Activated CD4-positive, alpha-beta T cell treated with anti-CD3 and anti-CD28 coated beads for 36 hours (primary cell): ENCODE measurements at regions of chr18 and their contacts with region 1.

Region 1: GRCh38 chr18:23231340-23232021 is 96.2 kb downstream of the CABLES1 start:
- DNase-seq: peak; percentile 87
- ATAC-seq: peak; percentile 90
- H3K4me3 Mint-ChIP-seq: peak overlapping the region; percentile 16
- H3K27ac Mint-ChIP-seq: peak overlapping the region; percentile 97
- H3K4me1 Mint-ChIP-seq: peaks cover 54% of the 10 kb centered on the region
- H3K27me3 Mint-ChIP-seq: no peaks in the 10 kb centered on the region

Region 2: GRCh38 chr18:23071285-23071684 is 160.2 kb before region 1 on chr18:
- CTCF ChIA-PET with region 1: no interaction called
- POLR2A ChIA-PET with region 1: no interaction called
- intact Hi-C with region 1: loop called in 1 of 2 experiments (anchors 1 kb)
- DNase-seq: peak; percentile 84
- ATAC-seq: peak; percentile 96
- H3K4me3 Mint-ChIP-seq: peak overlapping the region; percentile 34
- H3K27ac Mint-ChIP-seq: peak overlapping the region; percentile 86
- H3K4me1 Mint-ChIP-seq: peaks cover 55% of the 10 kb centered on the region
- H3K27me3 Mint-ChIP-seq: no peaks in the 10 kb centered on the region

Region 3: DNA sequence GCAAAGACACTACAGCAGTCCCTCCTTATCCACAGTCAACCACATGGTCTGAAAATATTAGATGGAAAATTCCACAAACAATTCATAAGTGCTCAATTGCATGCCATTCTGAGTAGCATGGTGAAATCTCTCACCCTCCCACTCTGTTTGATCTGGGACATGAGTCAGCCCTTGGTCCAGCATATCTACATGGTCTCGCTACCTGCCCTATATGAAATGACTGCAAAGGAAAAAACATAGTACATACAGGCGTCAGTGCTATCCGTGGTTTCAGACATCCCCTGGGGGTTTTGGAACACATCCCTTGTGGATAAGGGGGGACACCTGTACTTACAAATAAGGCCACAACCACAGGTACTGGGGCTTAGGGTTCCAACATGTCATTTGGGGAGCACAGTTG is 22.4 kb before region 1 on chr18:
- CTCF ChIA-PET with region 1: interaction called, 3 read pairs
- POLR2A ChIA-PET with region 1: no interaction called
- intact Hi-C with region 1: loop called (anchors 1 kb)
- DNase-seq: peak; percentile 55
- ATAC-seq: peak; percentile 91
- H3K4me3 Mint-ChIP-seq: no peak overlapping the region
- H3K27ac Mint-ChIP-seq: peak overlapping the region; percentile 78
- H3K4me1 Mint-ChIP-seq: peaks cover 33% of the 10 kb centered on the region
- H3K27me3 Mint-ChIP-seq: no peaks in the 10 kb centered on the region

Region 4: DNA sequence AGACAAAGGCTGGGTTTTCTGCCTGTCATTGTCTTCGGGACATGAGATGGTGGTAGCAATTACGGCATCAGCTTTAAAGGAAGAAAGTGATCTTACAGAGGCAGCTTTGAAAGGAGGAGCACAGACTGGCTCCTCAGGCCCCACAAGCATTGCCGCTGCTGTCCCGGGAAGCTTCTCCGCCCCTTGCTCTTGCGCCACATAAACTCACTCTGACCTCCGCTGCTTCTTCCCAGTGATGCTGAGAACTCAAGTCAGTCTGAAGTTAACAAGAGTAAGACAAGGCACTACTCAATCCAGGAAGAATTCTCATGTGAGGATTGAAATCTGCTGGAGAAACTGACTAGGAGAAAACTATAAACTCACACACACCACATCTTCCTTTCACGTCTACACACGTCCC is 109.2 kb after region 1 on chr18:
- CTCF ChIA-PET with region 1: no interaction called
- POLR2A ChIA-PET with region 1: no interaction called
- intact Hi-C with region 1: loop called in 1 of 2 experiments (anchors 1 kb)
- DNase-seq: no peak
- ATAC-seq: no peak
- H3K4me3 Mint-ChIP-seq: no peak overlapping the region
- H3K27ac Mint-ChIP-seq: peak overlapping the region; percentile 84
- H3K4me1 Mint-ChIP-seq: peaks cover 37% of the 10 kb centered on the region
- H3K27me3 Mint-ChIP-seq: no peaks in the 10 kb centered on the region

Region 5: GRCh38 chr18:23437357-23438045 is 206.0 kb after region 1 on chr18:
- CTCF ChIA-PET with region 1: no interaction called
- POLR2A ChIA-PET with region 1: no interaction called
- intact Hi-C with region 1: loop called in 1 of 2 experiments (anchors 5 kb)
- DNase-seq: peak; percentile 91
- ATAC-seq: peak; percentile 100
- H3K4me3 Mint-ChIP-seq: peak overlapping the region; percentile 93
- H3K27ac Mint-ChIP-seq: peak overlapping the region; percentile 89
- H3K4me1 Mint-ChIP-seq: peaks cover 17% of the 10 kb centered on the region
- H3K27me3 Mint-ChIP-seq: no peaks in the 10 kb centered on the region

Region 6: GRCh38 chr18:23503038-23503962 is 271.8 kb after region 1 on chr18 and contains the start of gene RMC1:
- CTCF ChIA-PET with region 1: interaction called, 4 read pairs
- POLR2A ChIA-PET with region 1: no interaction called
- intact Hi-C with region 1: loop called (anchors 1 to 2 kb)
- DNase-seq: peak; percentile 99
- ATAC-seq: peak; percentile 91
- H3K4me3 Mint-ChIP-seq: peak within 1 kb of the TSS; percentile 94
- H3K27ac Mint-ChIP-seq: peak within 1 kb of the TSS; percentile 94
- H3K4me1 Mint-ChIP-seq: peaks cover 38% of the 10 kb centered on the region
- H3K27me3 Mint-ChIP-seq: no peaks in the 10 kb centered on the region
- total RNA-seq, gene RMC1: 28.7 to 29.8 TPM

Region 7: DNA sequence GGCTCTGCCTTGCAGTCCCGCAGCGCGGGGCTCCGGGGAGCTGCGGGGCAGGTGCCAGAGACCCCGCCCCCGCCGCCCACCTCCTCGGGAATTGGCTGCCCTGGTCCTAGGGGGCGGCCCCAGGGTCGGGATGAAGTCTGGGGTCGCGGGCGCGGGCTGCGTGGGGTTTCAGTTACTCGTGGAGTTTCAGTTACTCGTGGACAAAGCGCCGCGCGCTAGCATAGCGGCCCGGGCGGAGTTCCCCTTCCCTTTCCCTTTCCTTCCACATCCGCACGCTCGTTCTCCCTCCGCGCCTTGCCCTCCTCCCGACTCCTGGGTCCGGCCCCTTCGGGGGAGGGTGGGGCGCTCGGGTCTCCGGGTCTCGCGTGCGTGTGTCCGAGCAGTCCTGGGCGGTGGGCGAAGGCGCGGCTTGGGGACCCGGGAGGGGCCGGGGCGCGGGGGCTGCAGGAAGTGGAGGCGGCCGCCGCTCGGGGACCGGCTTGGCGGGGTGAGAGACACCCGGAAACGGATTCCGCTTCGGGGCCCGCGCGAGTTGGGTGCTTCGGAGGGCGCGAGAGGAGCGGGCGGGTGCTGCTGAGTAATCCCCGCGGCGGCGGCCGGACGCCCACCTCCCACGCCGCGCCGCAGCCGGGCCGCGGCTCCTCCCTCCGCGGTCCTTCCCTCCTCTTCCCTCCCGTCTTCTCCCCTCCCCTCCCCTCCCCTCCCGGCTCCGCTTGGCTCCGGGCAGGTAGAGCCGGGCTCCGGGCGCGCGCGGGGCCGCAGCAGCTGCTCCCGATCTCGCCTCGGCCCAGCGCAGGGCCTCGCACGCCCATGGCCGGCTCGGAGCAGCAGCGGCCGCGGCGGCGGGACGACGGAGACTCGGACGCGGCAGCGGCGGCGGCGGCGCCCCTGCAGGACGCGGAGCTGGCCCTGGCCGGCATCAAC is 782.8 kb after region 1 on chr18 and contains the start of gene TTC39C:
- CTCF ChIA-PET with region 1: no interaction called
- POLR2A ChIA-PET with region 1: no interaction called
- intact Hi-C with region 1: loop called in 1 of 2 experiments (anchors 10 kb)
- DNase-seq: peak; percentile 93
- ATAC-seq: peak; percentile 68
- H3K4me3 Mint-ChIP-seq: peak within 1 kb of the TSS; percentile 94
- H3K27ac Mint-ChIP-seq: peak within 1 kb of the TSS; percentile 84
- H3K4me1 Mint-ChIP-seq: peaks cover 70% of the 10 kb centered on the region
- H3K27me3 Mint-ChIP-seq: peaks cover 2% of the 10 kb centered on the region
- total RNA-seq, gene TTC39C: 22.2 to 28.6 TPM

Region 8: GRCh38 chr18:24262087-24262486 is 1030.6 kb after region 1 on chr18:
- CTCF ChIA-PET with region 1: no interaction called
- POLR2A ChIA-PET with region 1: no interaction called
- intact Hi-C with region 1: no loop called
- DNase-seq: no peak
- ATAC-seq: no peak
- H3K4me3 Mint-ChIP-seq: no peak overlapping the region
- H3K27ac Mint-ChIP-seq: no peak overlapping the region
- H3K4me1 Mint-ChIP-seq: no peaks in the 10 kb centered on the region
- H3K27me3 Mint-ChIP-seq: peaks cover 4% of the 10 kb centered on the region